ENCODE measurements at regions of chr7 and their contacts with region 1.

Region 1: GRCh38 chr7:110386914-110387313 is 704.0 kb upstream of the LRRN3 start:
- DNase-seq: no peak
- H3K4me3 ChIP-seq: no peak overlapping the region
- H3K27ac ChIP-seq: no peak overlapping the region
- H3K4me1 ChIP-seq: no peaks in the 10 kb centered on the region
- H3K27me3 ChIP-seq: no peaks in the 10 kb centered on the region
- CTCF ChIP-seq: no peak
- POLR2A ChIP-seq: no peak

Region 2: DNA sequence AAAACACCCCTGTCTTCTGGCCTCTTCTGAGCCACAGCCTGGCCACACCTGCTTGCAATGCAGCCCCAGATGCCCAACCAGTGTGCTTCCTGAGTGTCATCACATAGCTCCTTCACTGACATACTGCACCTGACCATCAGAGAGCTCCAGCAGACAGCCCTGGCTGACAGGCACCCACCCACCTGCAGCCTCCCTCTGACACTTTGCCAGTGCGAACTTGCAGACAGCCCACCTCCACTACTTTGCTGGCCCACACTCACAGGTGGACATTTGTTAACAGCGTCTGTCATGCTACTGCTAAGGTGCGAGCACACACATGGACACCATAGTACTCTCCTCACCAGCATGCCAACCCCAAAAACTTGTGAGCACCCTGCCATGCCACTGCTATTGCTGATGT is 1077.1 kb before region 1 on chr7:
- intact Hi-C with region 1: no loop called
- DNase-seq: no peak
- H3K4me3 ChIP-seq: no peak overlapping the region
- H3K27ac ChIP-seq: no peak overlapping the region
- H3K4me1 ChIP-seq: no peaks in the 10 kb centered on the region
- H3K27me3 ChIP-seq: no peaks in the 10 kb centered on the region
- CTCF ChIP-seq: no peak
- POLR2A ChIP-seq: no peak

Region 3: GRCh38 chr7:110317541-110318275 is 69.2 kb before region 1 on chr7:
- intact Hi-C with region 1: loop called (anchors 2 kb)
- DNase-seq: no peak
- H3K4me3 ChIP-seq: no peak overlapping the region
- H3K27ac ChIP-seq: no peak overlapping the region
- H3K4me1 ChIP-seq: no peaks in the 10 kb centered on the region
- H3K27me3 ChIP-seq: no peaks in the 10 kb centered on the region
- CTCF ChIP-seq: no peak
- POLR2A ChIP-seq: no peak

Region 4: GRCh38 chr7:111561885-111562732 is 1175.2 kb after region 1 on chr7 and contains the start of gene IMMP2L:
- intact Hi-C with region 1: loop called (anchors 5 kb)
- DNase-seq: peak; percentile 77 to 85
- H3K4me3 ChIP-seq: peak within 1 kb of the TSS; percentile 85 to 89 (median 87)
- H3K27ac ChIP-seq: peak within 1 kb of the TSS; percentile 88 to 96
- H3K4me1 ChIP-seq: no peaks in the 10 kb centered on the region
- H3K27me3 ChIP-seq: no peaks in the 10 kb centered on the region
- CTCF ChIP-seq: no peak
- POLR2A ChIP-seq: no peak
- total RNA-seq, gene IMMP2L: 19.8 to 39.7 (median 30.8) TPM